ENCODE measurements at regions of chr12 and their contacts with region 1.

Region 1: GRCh38 chr12:45170456-45171042 is 45.3 kb upstream of the ANO6 start:
- DNase-seq: peak; percentile 72 to 86 (median 78)
- ATAC-seq: peak; percentile 42 to 86 (median 72)
- H3K4me3 ChIP-seq: no peak overlapping the region
- H3K27ac ChIP-seq: no peak overlapping the region
- H3K4me1 ChIP-seq: peaks cover 0 to 17% (median 0%) of the 10 kb centered on the region in 12 donors
- H3K27me3 ChIP-seq: no peaks in the 10 kb centered on the region
- CTCF ChIP-seq: peak; percentile 79 to 96 (median 92)
- POLR2A ChIP-seq: no peak

Region 2: DNA sequence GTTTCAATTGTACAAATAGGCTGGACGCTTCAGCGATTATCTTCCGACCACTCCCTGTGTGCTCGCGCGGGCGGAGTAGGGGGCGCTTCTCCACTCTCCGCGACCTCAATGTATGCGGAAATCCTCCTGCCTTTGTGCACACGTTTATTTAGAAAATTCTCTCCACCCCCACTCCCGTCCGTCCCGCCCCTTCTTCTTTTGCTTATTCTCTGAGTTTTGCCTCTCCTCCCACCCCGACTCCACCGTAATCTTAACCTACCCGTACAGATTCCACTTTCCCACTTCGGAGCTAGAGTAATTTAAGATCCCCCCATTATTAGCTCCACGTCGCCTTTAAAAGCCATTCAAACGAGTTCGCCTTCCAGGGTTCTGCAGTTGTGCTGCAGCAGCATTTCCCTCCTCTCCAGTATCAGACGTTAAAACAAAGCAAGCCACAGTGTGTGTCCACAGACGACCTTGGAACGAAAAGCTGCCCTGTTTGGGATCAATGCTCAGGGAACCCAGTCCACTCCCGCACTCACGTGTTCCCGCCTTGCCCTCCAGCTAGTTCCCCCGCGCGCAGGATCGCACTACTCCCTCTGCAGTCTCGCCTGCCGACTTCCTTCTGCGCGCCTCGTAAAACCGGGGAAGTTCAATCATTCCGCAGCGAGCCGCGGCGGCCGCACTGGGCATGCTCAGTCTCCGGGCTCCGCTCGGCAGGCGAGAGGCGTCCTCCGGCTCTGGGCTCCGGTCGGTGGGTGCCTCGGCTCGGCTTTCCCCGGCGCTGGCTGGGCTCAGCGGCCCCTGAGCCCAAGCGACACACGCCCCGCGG is 45.1 kb after region 1 on chr12 and contains the start of gene ANO6:
- intact Hi-C with region 1: loop called in 3 of 10 experiments (anchors 5 kb)
- DNase-seq: peak; percentile 91 to 94 (median 92)
- ATAC-seq: peak; percentile 90 to 97 (median 96)
- H3K4me3 ChIP-seq: peak within 1 kb of the TSS; percentile 61 to 97 (median 90)
- H3K27ac ChIP-seq: peak within 1 kb of the TSS; percentile 83 to 99 (median 94)
- H3K4me1 ChIP-seq: peaks cover 4 to 39% (median 28%) of the 10 kb centered on the region in 12 donors
- H3K27me3 ChIP-seq: no peaks in the 10 kb centered on the region
- CTCF ChIP-seq: peak in 4 of 12 donors; percentile 19 to 35 (median 29)
- POLR2A ChIP-seq: peak in 1 of 2 donors; percentile 76
- total RNA-seq, gene ANO6: 29.1 to 57.2 (median 46.7) TPM

Region 3: DNA sequence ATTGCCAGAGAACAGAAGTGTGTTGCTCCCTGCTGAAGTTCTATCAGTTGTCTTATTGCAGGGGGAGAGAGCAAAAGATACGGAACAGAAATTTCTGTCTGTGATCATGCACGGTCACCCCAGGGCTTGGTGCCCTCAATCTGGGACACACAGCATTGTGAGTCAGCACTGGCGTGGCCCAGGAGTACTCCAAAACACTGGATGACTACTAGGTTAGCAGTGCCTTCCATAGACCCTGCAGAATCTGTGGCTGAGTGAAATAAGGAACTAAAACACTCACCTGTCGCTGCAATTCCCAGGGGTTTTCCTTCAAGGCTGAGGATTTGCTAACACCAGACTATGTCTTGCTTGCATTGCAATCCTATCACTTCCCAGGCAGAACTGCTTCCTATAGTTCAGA is 210.8 kb after region 1 on chr12:
- intact Hi-C with region 1: loop called in 6 of 10 experiments (anchors 5 to 10 kb)
- DNase-seq: no peak
- ATAC-seq: no peak
- H3K4me3 ChIP-seq: no peak overlapping the region
- H3K27ac ChIP-seq: no peak overlapping the region
- H3K4me1 ChIP-seq: no peaks in the 10 kb centered on the region
- H3K27me3 ChIP-seq: no peaks in the 10 kb centered on the region
- CTCF ChIP-seq: no peak
- POLR2A ChIP-seq: no peak

Region 4: DNA sequence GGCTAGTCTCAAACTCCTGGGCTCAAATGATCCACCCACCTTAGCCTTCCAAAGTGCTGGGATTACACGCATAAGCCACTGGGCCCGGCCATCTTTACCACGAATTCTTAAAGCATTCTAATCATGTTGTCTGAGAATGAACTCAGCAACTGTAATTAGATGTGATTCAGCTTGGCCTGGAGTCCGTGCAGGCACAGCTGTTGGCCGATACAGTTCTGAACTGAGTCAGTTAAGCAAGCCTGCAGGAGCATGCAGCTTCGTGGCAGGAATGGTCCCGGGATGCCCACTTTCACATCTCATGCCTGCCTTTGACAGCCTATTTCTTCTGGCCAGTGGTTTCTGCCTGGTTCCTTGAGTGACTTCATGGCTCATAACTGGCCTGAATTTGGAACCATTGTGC is 239.4 kb after region 1 on chr12:
- intact Hi-C with region 1: loop called in 1 of 10 experiments (anchors 5 kb)
- DNase-seq: peak in 4 of 5 donors; percentile 25 to 61 (median 42)
- ATAC-seq: peak; percentile 69 to 84 (median 75)
- H3K4me3 ChIP-seq: no peak overlapping the region
- H3K27ac ChIP-seq: peak overlapping the region in 7 of 12 donors; percentile 15 to 79 (median 42)
- H3K4me1 ChIP-seq: peaks cover 0 to 40% (median 21%) of the 10 kb centered on the region in 12 donors
- H3K27me3 ChIP-seq: no peaks in the 10 kb centered on the region
- CTCF ChIP-seq: no peak
- POLR2A ChIP-seq: no peak

Region 5: DNA sequence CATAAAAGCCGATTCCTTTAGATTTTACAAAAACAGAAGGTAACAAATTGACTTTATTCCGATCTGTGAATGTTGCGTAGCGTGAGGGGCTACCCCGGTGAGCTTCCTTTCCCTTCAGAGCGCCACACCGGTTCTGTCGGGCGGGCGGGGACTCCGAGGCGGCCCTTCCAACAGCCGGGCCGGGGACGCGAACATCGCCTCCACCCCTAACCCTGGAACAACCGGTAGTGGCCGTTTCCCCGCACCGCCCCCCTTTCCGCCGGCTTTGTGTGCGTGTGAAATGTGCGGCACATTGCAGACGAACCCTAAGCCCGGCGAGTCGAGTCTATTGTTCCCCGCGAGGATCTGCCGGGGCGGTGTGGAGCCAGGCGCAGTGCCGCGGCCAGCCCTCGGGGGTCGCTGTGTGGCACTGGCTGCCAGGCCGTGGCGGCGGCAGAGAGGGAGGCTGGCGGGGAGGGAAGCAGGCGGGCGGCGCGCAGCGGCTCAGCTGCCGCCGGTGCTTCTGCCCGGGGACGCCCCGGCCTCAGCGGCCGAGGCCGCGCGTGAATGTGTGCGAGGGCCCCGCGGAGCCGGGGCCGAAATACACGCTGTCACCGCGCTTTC is 558.2 kb after region 1 on chr12:
- intact Hi-C with region 1: loop called in 1 of 10 experiments (anchors 10 kb)
- DNase-seq: peak; percentile 97 to 99 (median 97)
- ATAC-seq: peak; percentile 79 to 88 (median 81)
- H3K4me3 ChIP-seq: peak overlapping the region; percentile 64 to 94 (median 83)
- H3K27ac ChIP-seq: peak overlapping the region; percentile 94 to 100 (median 98)
- H3K4me1 ChIP-seq: peaks cover 9 to 58% (median 40%) of the 10 kb centered on the region in 12 donors
- H3K27me3 ChIP-seq: no peaks in the 10 kb centered on the region
- CTCF ChIP-seq: peak; percentile 85 to 99 (median 97)
- POLR2A ChIP-seq: peak in 1 of 2 donors; percentile 81